B cell (primary cell): ENCODE measurements at regions of chr1 and their contacts with region 1.

Region 1: GRCh38 chr1:153946622-153947241 is at the start of gene DENND4B:
- DNase-seq: peak; percentile 89
- ATAC-seq: peak; percentile 54
- H3K4me3 ChIP-seq: peak within 1 kb of the TSS; percentile 54 to 95 (median 85)
- H3K4me3 Mint-ChIP-seq: peak within 1 kb of the TSS; percentile 94
- H3K27ac ChIP-seq: peak within 1 kb of the TSS; percentile 91 to 98
- H3K27ac Mint-ChIP-seq: peak within 1 kb of the TSS; percentile 96
- H3K4me1 ChIP-seq: peaks cover 36 to 53% of the 10 kb centered on the region in 2 donors
- H3K4me1 Mint-ChIP-seq: peaks cover 56% of the 10 kb centered on the region
- H3K27me3 ChIP-seq: no peaks in the 10 kb centered on the region
- H3K27me3 Mint-ChIP-seq: no peaks in the 10 kb centered on the region
- CTCF ChIP-seq: peak; percentile 87
- total RNA-seq, gene DENND4B: 272 and 275 TPM in 2 replicates

Region 2: GRCh38 chr1:153670859-153671627 is 275.7 kb before region 1 on chr1 and contains the start of gene ILF2:
- CTCF ChIA-PET with region 1: no interaction called
- POLR2A ChIA-PET with region 1: no interaction called
- intact Hi-C with region 1: loop called (anchors 1 kb)
- DNase-seq: peak; percentile 99
- ATAC-seq: peak; percentile 90
- H3K4me3 ChIP-seq: peak within 1 kb of the TSS; percentile 74 to 99 (median 94)
- H3K4me3 Mint-ChIP-seq: no peak within 1 kb of the TSS
- H3K27ac ChIP-seq: peak within 1 kb of the TSS; percentile 86 to 95
- H3K27ac Mint-ChIP-seq: no peak within 1 kb of the TSS
- H3K4me1 ChIP-seq: peaks cover 10 to 18% of the 10 kb centered on the region in 2 donors
- H3K4me1 Mint-ChIP-seq: peaks cover 18% of the 10 kb centered on the region
- H3K27me3 ChIP-seq: no peaks in the 10 kb centered on the region
- H3K27me3 Mint-ChIP-seq: peaks cover under 1% of the 10 kb centered on the region
- CTCF ChIP-seq: peak; percentile 26
- total RNA-seq, gene ILF2: 86.5 and 89.8 TPM in 2 replicates

Region 3: DNA sequence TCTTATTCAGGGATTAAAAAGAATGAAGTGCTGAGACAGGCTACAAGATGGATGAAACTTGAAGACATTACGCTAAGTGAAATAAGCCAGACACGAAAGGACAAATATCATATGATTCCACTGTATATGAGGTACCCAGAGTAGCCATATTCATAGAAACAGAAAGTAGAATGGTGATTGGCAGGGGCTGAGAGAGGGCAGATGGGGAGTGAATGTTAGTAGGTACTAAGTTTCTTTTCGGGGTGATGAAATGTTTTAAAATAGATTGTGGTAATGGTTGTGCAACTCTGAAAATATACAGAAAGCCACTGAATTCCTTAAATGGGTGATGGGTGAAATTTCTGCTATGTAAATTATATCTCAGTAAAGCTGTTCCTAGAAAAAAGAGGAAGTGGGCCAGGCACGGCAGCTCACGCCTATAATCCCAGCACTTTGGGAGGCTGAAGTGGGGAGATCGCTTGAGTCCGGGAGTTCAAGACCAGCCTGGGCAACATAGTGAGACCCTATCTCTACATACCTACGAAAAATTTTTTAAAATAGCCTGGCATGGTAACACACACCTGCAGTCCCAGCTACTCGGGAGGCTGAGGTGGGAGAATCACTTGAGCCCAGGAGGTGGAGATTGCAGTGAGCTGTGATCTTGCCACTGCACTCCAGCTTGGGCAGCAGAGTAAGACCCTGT is 155.6 kb before region 1 on chr1:
- CTCF ChIA-PET with region 1: interaction called, 12 read pairs
- POLR2A ChIA-PET with region 1: interaction called, 14 read pairs
- intact Hi-C with region 1: loop called (anchors 2 kb)
- DNase-seq: peak; percentile 86
- ATAC-seq: peak; percentile 94
- H3K4me3 ChIP-seq: peak overlapping the region in 4 of 5 experiments; percentile 11 to 59 (median 44)
- H3K4me3 Mint-ChIP-seq: peak overlapping the region; percentile 59
- H3K27ac ChIP-seq: peak overlapping the region; percentile 91 to 92
- H3K27ac Mint-ChIP-seq: peak overlapping the region; percentile 95
- H3K4me1 ChIP-seq: peaks cover 28 to 34% of the 10 kb centered on the region in 2 donors
- H3K4me1 Mint-ChIP-seq: peaks cover 36% of the 10 kb centered on the region
- H3K27me3 ChIP-seq: no peaks in the 10 kb centered on the region
- H3K27me3 Mint-ChIP-seq: no peaks in the 10 kb centered on the region
- CTCF ChIP-seq: no peak

Region 4: GRCh38 chr1:153805042-153805745 is 141.5 kb before region 1 on chr1:
- CTCF ChIA-PET with region 1: interaction called, 4 read pairs
- POLR2A ChIA-PET with region 1: interaction called, 3 read pairs
- intact Hi-C with region 1: loop called (anchors 1 kb)
- DNase-seq: peak; percentile 91
- ATAC-seq: peak; percentile 98
- H3K4me3 ChIP-seq: no peak overlapping the region
- H3K4me3 Mint-ChIP-seq: peak overlapping the region; percentile 21
- H3K27ac ChIP-seq: peak overlapping the region; percentile 82 to 88
- H3K27ac Mint-ChIP-seq: peak overlapping the region; percentile 81
- H3K4me1 ChIP-seq: peaks cover 22 to 33% of the 10 kb centered on the region in 2 donors
- H3K4me1 Mint-ChIP-seq: peaks cover 30% of the 10 kb centered on the region
- H3K27me3 ChIP-seq: no peaks in the 10 kb centered on the region
- H3K27me3 Mint-ChIP-seq: no peaks in the 10 kb centered on the region
- CTCF ChIP-seq: no peak

Region 5: GRCh38 chr1:153849487-153850185 is 97.1 kb before region 1 on chr1:
- CTCF ChIA-PET with region 1: interaction called, 14 read pairs
- POLR2A ChIA-PET with region 1: no interaction called
- intact Hi-C with region 1: no loop called
- DNase-seq: peak; percentile 55
- ATAC-seq: peak; percentile 81
- H3K4me3 ChIP-seq: no peak overlapping the region
- H3K4me3 Mint-ChIP-seq: peak overlapping the region; percentile 2
- H3K27ac ChIP-seq: peak overlapping the region; percentile 56 to 76
- H3K27ac Mint-ChIP-seq: peak overlapping the region; percentile 46
- H3K4me1 ChIP-seq: peaks cover 46 to 48% of the 10 kb centered on the region in 2 donors
- H3K4me1 Mint-ChIP-seq: peaks cover 52% of the 10 kb centered on the region
- H3K27me3 ChIP-seq: no peaks in the 10 kb centered on the region
- H3K27me3 Mint-ChIP-seq: no peaks in the 10 kb centered on the region
- CTCF ChIP-seq: no peak

Region 6: GRCh38 chr1:153967082-153968000 is 20.6 kb after region 1 on chr1 and contains the start of gene CREB3L4:
- CTCF ChIA-PET with region 1: interaction called, 65 read pairs
- POLR2A ChIA-PET with region 1: interaction called, 115 read pairs
- intact Hi-C with region 1: loop called (anchors 1 kb)
- DNase-seq: peak; percentile 94
- ATAC-seq: peak; percentile 82
- H3K4me3 ChIP-seq: peak within 1 kb of the TSS; percentile 73 to 95 (median 90)
- H3K4me3 Mint-ChIP-seq: peak within 1 kb of the TSS; percentile 98
- H3K27ac ChIP-seq: peak within 1 kb of the TSS; percentile 91 to 94
- H3K27ac Mint-ChIP-seq: peak within 1 kb of the TSS; percentile 99
- H3K4me1 ChIP-seq: peaks cover 43 to 51% of the 10 kb centered on the region in 2 donors
- H3K4me1 Mint-ChIP-seq: peaks cover 49% of the 10 kb centered on the region
- H3K27me3 ChIP-seq: no peaks in the 10 kb centered on the region
- H3K27me3 Mint-ChIP-seq: no peaks in the 10 kb centered on the region
- CTCF ChIP-seq: peak; percentile 39
- total RNA-seq, gene CREB3L4: 19.9 and 21.8 TPM in 2 replicates

Region 7: DNA sequence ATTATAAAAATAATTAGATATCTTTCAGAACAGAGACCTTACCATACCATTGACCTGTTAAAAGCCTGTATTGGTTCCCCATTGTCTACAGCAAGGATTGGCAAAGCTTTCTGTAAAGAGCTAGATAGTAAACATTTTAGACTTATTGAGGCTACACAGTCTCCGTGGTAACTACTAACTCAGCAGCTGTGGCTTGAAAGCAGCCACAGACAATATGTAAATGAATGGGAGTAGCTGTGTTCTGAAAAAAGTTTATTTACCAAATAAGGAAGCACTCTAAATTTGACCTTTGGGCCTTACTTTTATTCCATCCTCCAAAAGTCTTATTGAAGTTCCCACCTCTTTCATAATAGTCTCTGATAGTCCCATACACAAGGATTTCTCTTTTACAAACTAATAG is 168.4 kb after region 1 on chr1:
- CTCF ChIA-PET with region 1: no interaction called
- POLR2A ChIA-PET with region 1: no interaction called
- intact Hi-C with region 1: no loop called
- DNase-seq: peak; percentile 18
- ATAC-seq: no peak
- H3K4me3 ChIP-seq: no peak overlapping the region
- H3K4me3 Mint-ChIP-seq: no peak overlapping the region
- H3K27ac ChIP-seq: no peak overlapping the region
- H3K27ac Mint-ChIP-seq: no peak overlapping the region
- H3K4me1 ChIP-seq: peaks cover 0 to 4% of the 10 kb centered on the region in 2 donors
- H3K4me1 Mint-ChIP-seq: peaks cover 5% of the 10 kb centered on the region
- H3K27me3 ChIP-seq: no peaks in the 10 kb centered on the region
- H3K27me3 Mint-ChIP-seq: no peaks in the 10 kb centered on the region
- CTCF ChIP-seq: no peak

Region 8: DNA sequence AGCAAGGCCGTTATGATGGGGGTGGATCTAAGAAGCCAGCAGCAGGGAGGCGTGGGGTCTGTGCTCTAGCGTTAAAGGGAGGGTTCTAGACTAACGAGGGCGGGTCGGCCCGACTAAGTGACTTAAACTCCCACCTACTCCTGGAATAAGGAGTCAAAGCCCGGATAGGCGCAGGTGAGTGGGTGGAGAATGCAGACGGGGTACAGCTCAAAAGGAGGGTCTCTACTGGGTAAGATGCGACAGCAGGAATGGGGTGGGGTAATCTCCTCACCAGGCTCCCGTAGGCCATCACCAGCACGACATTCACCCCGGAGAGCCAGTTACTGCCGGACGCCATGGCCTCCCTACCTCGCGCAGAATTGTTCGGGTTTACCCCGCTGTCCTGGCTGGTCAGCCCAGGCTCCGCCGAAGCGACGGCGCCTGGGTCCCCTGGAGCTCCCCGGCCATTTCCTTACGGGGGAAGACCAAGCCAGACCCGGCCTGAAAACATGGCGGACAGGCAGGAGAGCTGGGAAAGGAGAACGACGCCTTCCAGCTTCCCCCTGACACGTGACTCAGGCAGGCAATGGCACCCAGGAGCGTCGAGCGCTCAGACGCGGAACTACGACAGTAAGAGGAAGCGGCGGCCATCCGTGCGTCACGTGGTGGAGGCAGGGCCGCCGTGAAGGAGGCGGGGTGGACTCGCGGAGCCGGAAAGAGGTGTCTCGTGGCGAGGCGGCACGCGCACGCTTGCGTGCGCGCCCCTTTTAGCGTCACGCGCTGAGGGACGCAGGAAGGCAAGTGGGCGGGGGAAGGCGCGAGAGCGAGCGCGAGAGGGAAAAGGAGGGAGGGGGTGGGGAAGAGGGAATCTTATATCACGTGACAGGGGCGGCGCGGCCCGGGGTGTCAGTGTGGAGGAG is 273.6 kb after region 1 on chr1 and contains the start of gene UBAP2L:
- CTCF ChIA-PET with region 1: no interaction called
- POLR2A ChIA-PET with region 1: interaction called, 3 read pairs
- intact Hi-C with region 1: loop called (anchors 1 kb)
- DNase-seq: peak; percentile 100
- ATAC-seq: peak; percentile 83
- H3K4me3 ChIP-seq: peak within 1 kb of the TSS; percentile 92 to 99 (median 95)
- H3K4me3 Mint-ChIP-seq: peak within 1 kb of the TSS; percentile 97
- H3K27ac ChIP-seq: peak within 1 kb of the TSS; percentile 98 to 100
- H3K27ac Mint-ChIP-seq: peak within 1 kb of the TSS; percentile 97
- H3K4me1 ChIP-seq: peaks cover 34 to 39% of the 10 kb centered on the region in 2 donors
- H3K4me1 Mint-ChIP-seq: peaks cover 66% of the 10 kb centered on the region
- H3K27me3 ChIP-seq: no peaks in the 10 kb centered on the region
- H3K27me3 Mint-ChIP-seq: no peaks in the 10 kb centered on the region
- CTCF ChIP-seq: no peak
- total RNA-seq, gene UBAP2L: 218 and 219 TPM in 2 replicates